ENCODE measurements at regions of chr19 and their contacts with region 1.

Region 1: DNA sequence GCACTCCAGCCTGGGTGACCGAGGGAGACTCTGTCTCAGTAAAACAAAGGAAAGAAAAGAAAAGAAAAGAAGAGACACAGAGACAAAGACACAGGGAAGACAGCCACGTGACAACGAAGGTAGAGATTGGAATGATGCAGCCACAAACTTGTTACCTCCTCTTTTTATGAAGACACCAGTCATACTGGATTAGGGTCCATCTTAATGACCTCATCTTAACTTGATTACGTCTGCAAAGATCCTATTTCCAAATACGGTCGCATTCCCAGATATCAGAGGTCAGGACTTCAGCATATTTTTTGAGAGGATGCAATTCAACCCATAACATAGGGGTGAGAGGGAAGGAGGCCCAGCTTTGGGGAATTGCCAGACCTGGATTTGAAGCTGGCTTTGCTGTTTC is 4.1 kb downstream of the ZNRF4 start:
- DNase-seq: no peak
- H3K4me3 ChIP-seq: no peak overlapping the region
- H3K27ac ChIP-seq: no peak overlapping the region
- H3K4me1 ChIP-seq: no peaks in the 10 kb centered on the region
- H3K27me3 ChIP-seq: no peaks in the 10 kb centered on the region
- CTCF ChIP-seq: no peak

Region 2: GRCh38 chr19:5503598-5503997 is 44.2 kb after region 1 on chr19:
- CTCF ChIA-PET with region 1: no interaction called
- dilution Hi-C with region 1: loop called (anchors 5 kb)
- in situ Hi-C with region 1: no loop called
- intact Hi-C with region 1: no loop called
- DNase-seq: no peak
- H3K4me3 ChIP-seq: no peak overlapping the region
- H3K27ac ChIP-seq: no peak overlapping the region
- H3K4me1 ChIP-seq: no peaks in the 10 kb centered on the region
- H3K27me3 ChIP-seq: no peaks in the 10 kb centered on the region
- CTCF ChIP-seq: peak in 1 of 2 donors; percentile 34

Measured in mammary epithelial cell (primary cell).